Calu3 (cell line): ENCODE measurements at regions of chr2 and their contacts with region 1.

Region 1: GRCh38 chr2:39948016-39948719 is 169.1 kb upstream of the THUMPD2 start:
- DNase-seq: no peak
- H3K4me3 Mint-ChIP-seq: no peak overlapping the region
- H3K27ac Mint-ChIP-seq: no peak overlapping the region
- H3K4me1 Mint-ChIP-seq: no peaks in the 10 kb centered on the region
- H3K27me3 Mint-ChIP-seq: no peaks in the 10 kb centered on the region
- CTCF ChIP-seq: no peak

Region 2: DNA sequence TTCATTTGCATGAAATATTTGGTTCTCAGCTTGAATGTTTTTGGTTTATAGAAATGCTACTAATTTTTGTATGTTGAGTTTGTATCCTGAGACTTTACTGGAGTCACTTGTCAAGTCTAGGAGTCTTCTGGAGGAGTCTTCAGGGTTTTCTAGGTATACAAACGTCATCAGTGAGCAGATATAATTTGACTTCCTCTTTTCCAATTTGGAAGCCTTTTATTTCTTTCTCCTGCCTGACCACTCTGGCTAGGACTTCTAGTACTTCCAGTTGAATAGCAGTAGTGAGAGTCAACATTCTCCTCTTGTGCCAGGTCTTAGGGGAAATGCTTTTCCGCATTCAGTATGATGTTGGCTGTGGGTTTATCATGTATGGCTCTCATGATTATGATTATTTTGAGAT is 113.7 kb before region 1 on chr2:
- CTCF ChIA-PET with region 1: no interaction called
- intact Hi-C with region 1: no loop called
- DNase-seq: no peak
- H3K4me3 Mint-ChIP-seq: no peak overlapping the region
- H3K27ac Mint-ChIP-seq: no peak overlapping the region
- H3K4me1 Mint-ChIP-seq: no peaks in the 10 kb centered on the region
- H3K27me3 Mint-ChIP-seq: no peaks in the 10 kb centered on the region
- CTCF ChIP-seq: no peak

Region 3: DNA sequence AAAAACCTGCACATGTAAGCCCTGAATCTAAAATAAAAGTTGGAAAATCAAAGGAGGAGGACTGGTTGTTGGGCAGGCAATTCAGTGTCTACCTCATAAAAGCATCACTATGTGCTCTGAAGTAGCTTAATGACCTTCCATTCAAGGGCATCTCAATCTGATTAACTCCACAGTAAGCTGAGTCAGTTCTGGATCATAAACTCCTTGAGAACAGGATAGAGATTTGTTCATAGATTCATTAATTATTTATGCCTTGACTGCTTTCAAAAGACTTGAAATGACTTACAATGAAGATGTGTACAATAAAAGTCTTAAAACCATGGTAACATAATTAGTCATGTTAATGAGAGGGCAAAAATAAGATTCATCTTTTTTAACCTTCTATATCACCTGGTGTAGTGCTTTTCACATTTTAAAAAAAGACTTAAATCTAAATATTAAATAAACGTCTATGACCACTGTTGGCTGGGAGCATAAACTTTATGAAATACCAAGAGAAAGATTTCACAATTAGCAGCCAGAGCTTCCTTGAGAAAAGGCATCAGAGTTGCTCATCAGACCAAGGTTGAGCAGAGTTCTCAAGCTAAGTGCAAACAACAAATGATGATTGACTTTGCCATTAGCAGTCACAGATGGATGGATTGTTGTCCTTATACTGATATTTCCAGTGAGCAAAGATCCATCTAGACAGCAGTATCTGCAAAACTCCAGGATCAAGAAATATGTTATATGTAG is 68.2 kb after region 1 on chr2:
- CTCF ChIA-PET with region 1: no interaction called
- intact Hi-C with region 1: loop called (anchors 2 kb)
- DNase-seq: no peak
- H3K4me3 Mint-ChIP-seq: no peak overlapping the region
- H3K27ac Mint-ChIP-seq: no peak overlapping the region
- H3K4me1 Mint-ChIP-seq: no peaks in the 10 kb centered on the region
- H3K27me3 Mint-ChIP-seq: no peaks in the 10 kb centered on the region
- CTCF ChIP-seq: no peak